Activated CD4-positive, alpha-beta memory T cell treated with anti-CD3 and anti-CD28 coated beads for 36 hours (primary cell): ENCODE measurements at regions of chr14 and their contacts with region 1.

Region 1: GRCh38 chr14:80930836-80931389 is 10.6 kb downstream of the CEP128 start:
- DNase-seq: peak; percentile 80
- H3K4me3 Mint-ChIP-seq: peak overlapping the region; percentile 54
- H3K27ac Mint-ChIP-seq: peak overlapping the region; percentile 82
- H3K4me1 Mint-ChIP-seq: peaks cover 41% of the 10 kb centered on the region
- H3K27me3 Mint-ChIP-seq: no peaks in the 10 kb centered on the region

Region 2: DNA sequence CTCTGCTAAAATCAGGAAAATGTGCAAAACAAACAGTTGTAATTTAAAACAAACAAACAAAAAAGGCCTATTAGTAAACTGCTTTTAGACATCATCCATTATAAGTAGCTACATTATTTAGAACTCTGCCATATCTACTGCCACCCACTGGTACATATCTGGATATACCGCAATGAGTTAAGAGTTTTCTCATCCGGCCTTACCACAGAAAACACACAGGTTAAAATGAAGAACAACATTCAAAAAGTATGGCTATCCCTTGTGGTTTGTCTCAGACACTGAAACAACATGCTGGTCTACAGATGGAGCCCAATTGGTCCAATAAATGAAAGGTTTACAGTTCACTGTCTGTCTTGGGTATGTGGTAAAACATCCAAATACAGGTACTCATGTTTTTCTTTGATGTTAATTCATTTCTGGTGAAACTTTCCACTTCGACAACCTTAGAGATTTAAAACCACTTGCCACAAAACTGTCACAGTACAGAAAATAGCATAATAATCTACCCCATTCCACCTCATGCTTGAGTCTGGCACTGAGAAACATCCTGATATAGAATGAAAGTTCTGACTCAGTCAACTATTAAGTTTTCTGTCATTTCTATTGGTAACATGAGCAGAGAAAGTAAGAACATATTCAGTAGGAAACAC is 343.7 kb before region 1 on chr14:
- CTCF ChIA-PET with region 1: no interaction called
- POLR2A ChIA-PET with region 1: no interaction called
- intact Hi-C with region 1: loop called (anchors 1 kb)
- DNase-seq: no peak
- H3K4me3 Mint-ChIP-seq: no peak overlapping the region
- H3K27ac Mint-ChIP-seq: peak overlapping the region; percentile 67
- H3K4me1 Mint-ChIP-seq: peaks cover 17% of the 10 kb centered on the region
- H3K27me3 Mint-ChIP-seq: no peaks in the 10 kb centered on the region

Region 3: DNA sequence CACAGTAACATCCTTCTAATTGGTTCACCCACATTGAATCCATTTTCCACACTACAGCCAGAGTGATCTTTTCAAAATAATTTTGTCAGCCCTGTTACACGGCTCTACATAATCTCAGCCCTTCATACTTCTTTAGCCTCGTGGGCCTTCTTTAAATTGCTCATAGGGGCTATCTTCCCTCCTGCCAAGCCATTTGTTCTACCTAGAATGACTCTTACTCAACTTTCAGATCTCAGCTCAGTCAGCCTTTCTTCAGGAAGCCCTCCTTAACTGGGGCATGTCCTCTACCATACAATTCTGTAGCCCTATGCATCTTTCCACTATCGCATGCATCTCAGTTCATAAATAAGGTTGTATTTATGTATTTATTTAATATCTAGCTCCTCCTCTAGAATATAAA is 29.1 kb before region 1 on chr14:
- CTCF ChIA-PET with region 1: no interaction called
- POLR2A ChIA-PET with region 1: no interaction called
- intact Hi-C with region 1: loop called (anchors 1 kb)
- DNase-seq: no peak
- H3K4me3 Mint-ChIP-seq: no peak overlapping the region
- H3K27ac Mint-ChIP-seq: no peak overlapping the region
- H3K4me1 Mint-ChIP-seq: peaks cover 13% of the 10 kb centered on the region
- H3K27me3 Mint-ChIP-seq: no peaks in the 10 kb centered on the region

Region 4: DNA sequence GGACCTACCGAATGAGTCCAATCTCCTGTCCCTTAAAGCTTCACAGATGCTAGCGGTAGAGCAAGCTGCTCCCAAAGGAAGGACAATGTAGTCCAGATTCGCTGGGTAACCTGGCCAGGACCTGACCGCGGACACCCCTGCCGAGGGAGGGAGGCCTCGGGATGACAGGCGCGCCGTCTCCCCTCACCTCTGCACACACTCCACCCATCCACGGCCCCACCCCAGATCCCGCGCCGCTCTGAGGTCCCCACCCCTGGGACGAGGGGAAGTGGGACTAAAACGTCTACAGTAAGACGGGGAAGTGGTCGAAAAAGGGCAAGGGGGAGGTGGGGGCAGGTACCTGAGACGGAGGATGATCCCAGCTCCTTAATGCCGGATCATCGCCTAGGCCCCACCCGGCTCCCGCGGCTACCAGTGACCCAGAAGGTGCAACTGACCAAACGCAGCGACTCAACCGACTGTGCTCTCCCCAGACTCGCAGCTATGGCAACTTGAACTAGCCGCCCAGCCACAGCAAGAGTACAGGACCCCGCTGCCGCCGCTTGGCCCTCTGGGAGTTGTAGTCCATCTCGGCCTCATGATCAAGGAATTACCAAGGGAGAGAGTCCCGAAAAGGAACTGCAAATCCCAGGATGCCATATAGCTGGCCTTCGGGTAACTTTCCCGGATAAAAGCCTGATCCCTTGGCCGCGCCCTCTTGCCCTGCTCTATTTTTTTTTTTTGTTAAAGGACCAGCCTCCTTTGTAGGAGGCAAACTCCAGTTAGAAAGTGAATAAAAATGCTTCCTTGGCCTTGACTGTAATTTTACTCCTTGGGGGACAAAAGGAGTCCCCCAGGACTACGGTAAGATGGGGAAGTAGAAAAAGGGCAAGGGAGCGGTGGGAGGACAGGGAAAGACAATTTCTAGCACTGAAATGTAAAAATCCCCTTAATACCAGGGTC is 10.6 kb after region 1 on chr14 and contains the start of gene CEP128:
- CTCF ChIA-PET with region 1: no interaction called
- POLR2A ChIA-PET with region 1: interaction called, 29 read pairs
- intact Hi-C with region 1: loop called (anchors 1 kb)
- DNase-seq: peak; percentile 92
- H3K4me3 Mint-ChIP-seq: peak within 1 kb of the TSS; percentile 88
- H3K27ac Mint-ChIP-seq: peak within 1 kb of the TSS; percentile 93
- H3K4me1 Mint-ChIP-seq: peaks cover 37% of the 10 kb centered on the region
- H3K27me3 Mint-ChIP-seq: no peaks in the 10 kb centered on the region
- total RNA-seq, gene CEP128: 19.4 to 22.8 TPM

Region 5: DNA sequence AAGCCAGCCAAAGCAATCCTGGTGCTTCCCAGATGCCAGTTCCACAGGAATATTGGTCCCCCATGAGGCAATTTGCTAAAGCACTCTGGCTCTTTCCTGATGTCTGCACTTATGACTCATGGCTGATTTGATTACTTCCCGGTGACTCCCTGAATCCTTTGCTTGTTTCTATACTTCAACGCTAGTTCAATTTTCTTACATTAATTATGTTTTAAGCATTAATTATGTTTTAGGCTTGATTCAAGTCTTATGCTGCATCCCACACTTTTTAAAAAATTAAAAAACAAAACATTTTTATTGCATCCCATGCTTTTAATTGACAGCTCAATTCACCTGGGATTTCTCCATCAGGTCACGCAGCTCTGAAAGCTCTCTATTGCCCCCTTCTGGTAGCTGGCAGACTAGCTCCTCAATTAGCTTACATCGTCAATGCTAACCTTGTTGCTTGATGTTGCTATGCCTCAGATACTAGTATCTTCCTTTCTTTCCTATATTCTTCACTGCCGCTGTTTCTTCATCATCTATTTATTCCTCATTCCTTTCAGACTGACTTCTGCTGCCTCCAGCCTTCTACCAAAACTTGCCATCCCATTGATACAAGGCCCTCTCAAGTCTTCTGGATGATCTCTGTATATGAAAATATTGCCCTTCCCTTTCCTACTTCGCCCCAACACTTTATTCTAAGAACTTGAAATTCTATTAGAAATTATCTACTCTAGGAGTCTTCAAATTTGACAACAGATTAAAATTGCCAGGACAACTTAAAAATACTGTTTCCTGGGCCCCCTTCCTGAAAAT is 56.5 kb after region 1 on chr14:
- CTCF ChIA-PET with region 1: interaction called, 9 read pairs
- POLR2A ChIA-PET with region 1: interaction called, 3 read pairs
- intact Hi-C with region 1: loop called (anchors 1 kb)
- DNase-seq: peak; percentile 72
- H3K4me3 Mint-ChIP-seq: no peak overlapping the region
- H3K27ac Mint-ChIP-seq: no peak overlapping the region
- H3K4me1 Mint-ChIP-seq: no peaks in the 10 kb centered on the region
- H3K27me3 Mint-ChIP-seq: peaks cover 9% of the 10 kb centered on the region

Region 6: DNA sequence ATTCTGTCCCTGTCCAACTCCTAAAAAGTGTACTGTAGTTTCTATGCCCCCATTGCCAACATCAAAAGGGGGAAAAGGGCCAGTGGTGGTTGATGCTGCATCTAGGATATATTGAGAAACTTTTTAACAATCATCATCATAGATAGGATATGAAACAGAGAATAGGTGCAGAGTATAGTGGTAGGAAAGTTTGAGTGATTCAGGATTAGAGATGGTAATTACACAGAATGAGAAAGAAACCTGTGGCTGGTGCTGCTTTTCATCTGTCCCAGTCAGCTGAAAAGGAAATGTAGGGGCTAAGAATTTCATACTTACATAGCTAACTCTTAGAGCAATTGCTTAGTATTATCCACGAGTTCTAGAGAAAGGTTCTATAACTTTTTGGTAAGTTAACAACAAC is 222.3 kb after region 1 on chr14:
- CTCF ChIA-PET with region 1: no interaction called
- POLR2A ChIA-PET with region 1: no interaction called
- intact Hi-C with region 1: loop called (anchors 1 kb)
- DNase-seq: no peak
- H3K4me3 Mint-ChIP-seq: no peak overlapping the region
- H3K27ac Mint-ChIP-seq: no peak overlapping the region
- H3K4me1 Mint-ChIP-seq: peaks cover 11% of the 10 kb centered on the region
- H3K27me3 Mint-ChIP-seq: peaks cover 2% of the 10 kb centered on the region